Breast epithelium (tissue), 4 donors: ENCODE measurements at regions of chr10 and their contacts with region 1.

Region 1: GRCh38 chr10:8520382-8520781 is 465.9 kb downstream of the GATA3 start:
- DNase-seq: no peak
- H3K4me3 ChIP-seq: no peak overlapping the region
- H3K27ac ChIP-seq: no peak overlapping the region
- H3K4me1 ChIP-seq: no peaks in the 10 kb centered on the region
- H3K27me3 ChIP-seq: no peaks in the 10 kb centered on the region
- CTCF ChIP-seq: no peak
- POLR2A ChIP-seq: no peak

Region 2: DNA sequence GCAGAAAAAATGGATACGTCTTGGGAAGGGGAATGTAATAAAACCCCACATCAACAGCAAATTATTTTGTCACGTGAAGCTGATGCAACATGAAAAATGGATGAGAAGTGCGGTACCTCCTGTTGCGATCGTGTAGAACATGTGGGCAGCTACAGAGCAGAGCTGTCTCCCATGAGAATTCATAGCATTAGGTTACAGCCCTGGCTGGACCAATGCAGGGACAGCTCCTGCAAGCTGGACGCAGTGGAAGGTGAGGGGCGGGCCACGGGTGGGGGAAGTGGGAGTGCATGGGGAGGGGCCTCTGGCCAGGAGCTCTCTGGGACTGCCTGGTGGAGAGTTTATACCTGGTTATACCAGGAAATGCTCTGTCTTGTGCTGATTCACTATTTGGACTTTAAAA is 345.6 kb before region 1 on chr10:
- intact Hi-C with region 1: loop called (anchors 5 kb)
- DNase-seq: no peak
- H3K4me3 ChIP-seq: no peak overlapping the region
- H3K27ac ChIP-seq: no peak overlapping the region
- H3K4me1 ChIP-seq: no peaks in the 10 kb centered on the region
- H3K27me3 ChIP-seq: no peaks in the 10 kb centered on the region
- CTCF ChIP-seq: no peak
- POLR2A ChIP-seq: no peak

Region 3: DNA sequence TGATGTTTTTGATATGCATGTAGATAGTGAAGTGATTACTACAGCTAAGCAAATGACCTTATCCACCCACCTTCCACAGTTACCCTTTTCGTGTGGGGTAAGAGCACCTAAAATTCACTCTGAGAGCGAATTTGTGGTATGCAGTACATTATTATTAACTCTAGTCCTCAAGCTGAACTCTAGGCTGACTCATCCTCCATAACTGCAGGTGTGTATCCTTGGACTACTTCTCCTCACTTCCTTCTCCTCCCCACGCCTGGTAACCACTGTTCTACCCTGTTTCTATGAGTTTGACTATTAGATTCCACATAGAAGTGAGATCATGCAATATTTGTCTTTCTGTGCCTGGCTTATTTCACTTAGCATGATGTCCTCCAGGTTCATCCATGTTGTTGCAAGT is 18.7 kb after region 1 on chr10:
- intact Hi-C with region 1: loop called (anchors 1 kb)
- DNase-seq: no peak
- H3K4me3 ChIP-seq: no peak overlapping the region
- H3K27ac ChIP-seq: no peak overlapping the region
- H3K4me1 ChIP-seq: no peaks in the 10 kb centered on the region
- H3K27me3 ChIP-seq: no peaks in the 10 kb centered on the region
- CTCF ChIP-seq: no peak
- POLR2A ChIP-seq: no peak